ENCODE measurements at regions of chr11 and their contacts with region 1.

Region 1: GRCh38 chr11:33161120-33162005 is at the start of gene CSTF3:
- DNase-seq: peak; percentile 100
- ATAC-seq: peak; percentile 97 to 99 (median 98)
- H3K4me3 ChIP-seq: peak within 1 kb of the TSS; percentile 41 to 77 (median 65)
- H3K27ac ChIP-seq: peak within 1 kb of the TSS; percentile 49 to 86 (median 69)
- H3K4me1 ChIP-seq: peaks cover 8 to 25% (median 13%) of the 10 kb centered on the region in 3 donors
- H3K27me3 ChIP-seq: no peaks in the 10 kb centered on the region
- CTCF ChIP-seq: peak; percentile 17 to 51 (median 33)
- total RNA-seq, gene CSTF3: 5.0 to 13.6 (median 9.6) TPM

Region 2: GRCh38 chr11:33687733-33688479 is 526.5 kb after region 1 on chr11:
- intact Hi-C with region 1: loop called in 1 of 3 experiments (anchors 10 kb)
- DNase-seq: peak in 1 of 6 donors; percentile 49
- ATAC-seq: peak in 2 of 4 donors; percentile 12 to 21
- H3K4me3 ChIP-seq: no peak overlapping the region
- H3K27ac ChIP-seq: no peak overlapping the region
- H3K4me1 ChIP-seq: peaks cover 11 to 39% (median 20%) of the 10 kb centered on the region in 3 donors
- H3K27me3 ChIP-seq: no peaks in the 10 kb centered on the region
- CTCF ChIP-seq: peak in 3 of 4 donors; percentile 10 to 38 (median 30)